ENCODE measurements at regions of chr11 and their contacts with region 1.

Region 1: DNA sequence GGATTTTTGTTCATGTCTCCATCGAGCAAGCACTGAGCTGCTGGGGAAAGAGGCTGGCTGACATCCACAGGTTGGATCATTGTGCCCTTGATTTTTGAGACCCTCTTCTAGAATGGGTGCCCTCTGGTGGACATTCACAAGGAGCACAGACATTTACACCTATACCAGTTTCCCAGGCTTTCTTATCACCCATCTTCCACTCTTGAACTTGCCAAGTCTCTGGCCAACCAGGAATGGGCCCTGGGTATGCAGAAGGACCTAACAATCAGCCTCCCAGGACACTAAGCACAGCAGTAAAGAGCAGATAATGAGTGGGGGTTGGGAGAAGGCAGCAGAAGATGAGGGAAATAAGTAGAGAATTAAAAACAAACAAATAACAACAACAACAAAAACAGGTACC is 5.7 kb upstream of the INTS4 start:
- DNase-seq: peak; percentile 53
- H3K4me3 Mint-ChIP-seq: no peak overlapping the region
- H3K27ac Mint-ChIP-seq: no peak overlapping the region
- H3K4me1 Mint-ChIP-seq: peaks cover 7% of the 10 kb centered on the region
- H3K27me3 Mint-ChIP-seq: no peaks in the 10 kb centered on the region

Region 2: GRCh38 chr11:77776455-77776854 is 223.7 kb before region 1 on chr11:
- CTCF ChIA-PET with region 1: interaction called, 8 read pairs
- POLR2A ChIA-PET with region 1: no interaction called
- intact Hi-C with region 1: loop called (anchors 1 kb)
- DNase-seq: no peak
- H3K4me3 Mint-ChIP-seq: no peak overlapping the region
- H3K27ac Mint-ChIP-seq: no peak overlapping the region
- H3K4me1 Mint-ChIP-seq: peaks cover 46% of the 10 kb centered on the region
- H3K27me3 Mint-ChIP-seq: no peaks in the 10 kb centered on the region

Region 3: DNA sequence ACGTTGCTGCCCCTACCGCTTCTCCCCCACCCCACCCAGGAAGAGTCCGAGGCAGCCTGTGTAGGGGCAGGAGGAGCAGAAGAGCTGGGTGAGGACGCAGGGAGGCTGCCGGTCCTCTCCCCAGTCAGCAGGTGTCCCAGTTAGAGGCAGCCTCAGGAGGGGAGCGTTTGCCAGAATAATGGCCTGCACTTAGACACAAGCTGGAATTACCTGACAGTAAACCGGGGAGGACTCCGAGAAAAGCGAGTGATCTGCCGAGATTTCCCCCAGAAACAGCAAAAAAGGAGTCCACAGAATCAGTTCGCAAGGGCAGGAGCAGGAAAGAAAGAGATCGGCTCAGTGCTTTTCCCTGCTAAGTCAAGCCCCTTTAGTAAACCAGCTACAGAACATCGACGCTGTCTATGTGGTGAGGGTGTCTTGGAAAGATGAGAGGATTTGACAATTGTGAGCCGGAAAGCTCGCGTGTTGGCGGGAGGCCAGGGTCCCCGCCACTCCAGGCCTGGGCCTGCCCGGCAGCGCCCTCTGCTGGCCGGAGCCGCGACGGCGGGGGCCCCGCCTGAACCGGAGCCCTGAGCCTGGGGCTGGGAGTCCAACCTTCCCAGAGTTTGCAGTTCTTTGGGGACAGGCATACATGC is 45.8 kb after region 1 on chr11:
- CTCF ChIA-PET with region 1: interaction called, 19 read pairs
- POLR2A ChIA-PET with region 1: no interaction called
- intact Hi-C with region 1: no loop called
- DNase-seq: peak; percentile 82
- H3K4me3 Mint-ChIP-seq: peak overlapping the region; percentile 26
- H3K27ac Mint-ChIP-seq: no peak overlapping the region
- H3K4me1 Mint-ChIP-seq: peaks cover 12% of the 10 kb centered on the region
- H3K27me3 Mint-ChIP-seq: no peaks in the 10 kb centered on the region

Measured in activated CD4-positive, alpha-beta memory T cell treated with anti-CD3 and anti-CD28 coated beads for 36 hours (primary cell).